OCI-LY7 (cell line): ENCODE measurements at regions of chr11 and their contacts with region 1.

Region 1: DNA sequence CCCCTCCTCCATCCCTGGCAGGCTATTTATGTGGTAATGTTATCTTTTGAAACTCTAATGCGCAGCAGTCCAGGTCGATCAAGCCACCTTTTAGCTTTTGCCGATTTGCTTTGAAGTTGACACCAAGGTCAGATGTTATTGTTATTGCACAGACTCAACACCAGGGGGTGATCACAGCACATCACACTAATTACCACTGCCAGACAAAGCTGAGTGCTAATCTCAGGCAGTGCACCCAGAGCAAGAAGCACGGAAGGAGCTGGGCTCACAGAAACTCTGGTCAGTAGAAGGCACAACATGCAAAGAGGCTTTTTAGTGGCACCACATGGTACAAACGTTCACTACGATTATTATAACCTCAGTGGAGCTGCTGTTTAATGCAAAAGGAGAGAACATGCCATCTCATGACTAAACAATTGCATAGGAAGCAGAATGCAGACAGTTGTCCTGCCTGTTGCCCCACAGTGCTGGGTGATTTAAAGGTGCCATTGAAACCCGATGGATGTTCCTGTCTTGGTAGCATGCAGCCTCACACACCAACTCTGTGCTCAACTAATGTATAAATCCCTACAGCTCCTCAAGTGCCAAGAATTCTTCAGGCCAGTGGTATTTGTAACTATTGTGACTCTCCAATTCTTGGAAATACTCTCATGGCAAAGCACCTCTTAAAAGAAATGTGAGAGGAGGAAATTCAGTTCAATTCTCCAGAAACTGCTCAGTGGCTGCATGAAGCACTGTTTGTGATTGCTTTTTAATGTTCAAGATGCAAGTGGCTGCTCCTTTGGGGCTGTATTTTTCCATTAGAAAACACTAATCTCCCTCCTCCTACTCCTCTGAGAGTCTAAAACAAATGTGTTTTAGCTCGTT is 353.9 kb upstream of the DDI1 start:
- DNase-seq: peak; percentile 75
- H3K4me3 ChIP-seq: no peak overlapping the region
- H3K27ac ChIP-seq: no peak overlapping the region
- H3K4me1 ChIP-seq: no peaks in the 10 kb centered on the region
- CTCF ChIP-seq: peak; percentile 88

Region 2: GRCh38 chr11:103529181-103529684 is 153.3 kb before region 1 on chr11:
- CTCF ChIA-PET with region 1: no interaction called
- POLR2A ChIA-PET with region 1: no interaction called
- intact Hi-C with region 1: no loop called
- DNase-seq: no peak
- H3K4me3 ChIP-seq: no peak overlapping the region
- H3K27ac ChIP-seq: no peak overlapping the region
- H3K4me1 ChIP-seq: no peaks in the 10 kb centered on the region
- CTCF ChIP-seq: no peak

Region 3: DNA sequence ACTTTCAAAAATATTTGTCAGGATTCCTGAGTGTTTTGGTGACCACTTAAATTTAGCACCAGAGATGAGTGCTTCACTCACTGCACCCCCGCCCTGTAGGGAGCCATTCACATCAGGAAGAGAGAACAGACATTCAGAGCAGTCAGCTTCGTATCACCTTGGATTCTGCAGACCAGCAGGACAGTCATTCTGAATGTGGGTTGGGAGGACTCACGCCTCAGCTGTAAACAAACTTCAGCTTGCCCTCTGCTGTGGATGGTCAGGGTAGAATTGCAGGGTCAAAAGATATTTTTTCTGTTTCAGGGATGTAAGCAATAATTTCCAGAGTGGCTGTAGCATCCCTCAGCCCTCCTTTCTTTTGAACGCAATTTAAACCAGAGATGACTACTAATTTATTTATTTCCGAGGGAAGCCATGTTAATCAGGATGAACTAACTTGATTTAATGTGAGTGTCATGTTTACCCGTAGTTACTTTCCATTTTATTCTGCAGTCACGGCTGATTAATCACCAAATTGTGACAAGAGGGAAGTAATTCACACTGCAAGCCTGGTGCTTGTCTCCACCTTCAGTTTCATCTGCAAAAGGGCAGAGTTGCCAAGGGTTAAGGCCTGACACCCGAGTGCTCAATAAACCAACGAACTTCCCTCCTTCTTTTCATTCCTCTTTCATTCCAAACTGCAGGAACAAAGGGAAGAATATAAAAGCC is 179.7 kb after region 1 on chr11:
- CTCF ChIA-PET with region 1: no interaction called
- POLR2A ChIA-PET with region 1: no interaction called
- intact Hi-C with region 1: loop called (anchors 1 kb)
- DNase-seq: peak; percentile 16
- H3K4me3 ChIP-seq: no peak overlapping the region
- H3K27ac ChIP-seq: no peak overlapping the region
- H3K4me1 ChIP-seq: peaks cover 9% of the 10 kb centered on the region
- CTCF ChIP-seq: no peak; the same call in 1 of the 2 replicates

Region 4: DNA sequence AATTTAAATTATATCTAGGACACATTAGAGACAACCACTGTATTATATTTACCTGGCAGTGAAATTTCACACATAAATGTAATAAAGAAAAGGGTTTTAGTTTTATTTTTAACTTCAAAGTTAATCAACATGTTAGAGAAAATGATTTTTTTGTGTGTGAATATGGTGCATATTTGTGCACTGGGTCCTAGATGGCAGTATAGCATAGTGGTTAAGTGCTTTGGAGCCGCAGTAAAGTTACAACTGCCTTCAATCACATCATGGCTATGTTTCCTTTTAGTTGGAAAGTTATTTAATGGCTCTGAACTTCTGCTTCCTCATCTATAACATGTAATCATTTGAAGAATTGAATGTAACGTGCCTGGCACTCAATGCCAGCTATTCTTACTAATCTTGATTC is 245.0 kb after region 1 on chr11:
- CTCF ChIA-PET with region 1: no interaction called
- POLR2A ChIA-PET with region 1: interaction called, 3 read pairs
- intact Hi-C with region 1: loop called (anchors 2 kb)
- DNase-seq: peak; percentile 28
- H3K4me3 ChIP-seq: no peak overlapping the region
- H3K27ac ChIP-seq: no peak overlapping the region
- H3K4me1 ChIP-seq: peaks cover 20% of the 10 kb centered on the region
- CTCF ChIP-seq: peak; percentile 75

Region 5: DNA sequence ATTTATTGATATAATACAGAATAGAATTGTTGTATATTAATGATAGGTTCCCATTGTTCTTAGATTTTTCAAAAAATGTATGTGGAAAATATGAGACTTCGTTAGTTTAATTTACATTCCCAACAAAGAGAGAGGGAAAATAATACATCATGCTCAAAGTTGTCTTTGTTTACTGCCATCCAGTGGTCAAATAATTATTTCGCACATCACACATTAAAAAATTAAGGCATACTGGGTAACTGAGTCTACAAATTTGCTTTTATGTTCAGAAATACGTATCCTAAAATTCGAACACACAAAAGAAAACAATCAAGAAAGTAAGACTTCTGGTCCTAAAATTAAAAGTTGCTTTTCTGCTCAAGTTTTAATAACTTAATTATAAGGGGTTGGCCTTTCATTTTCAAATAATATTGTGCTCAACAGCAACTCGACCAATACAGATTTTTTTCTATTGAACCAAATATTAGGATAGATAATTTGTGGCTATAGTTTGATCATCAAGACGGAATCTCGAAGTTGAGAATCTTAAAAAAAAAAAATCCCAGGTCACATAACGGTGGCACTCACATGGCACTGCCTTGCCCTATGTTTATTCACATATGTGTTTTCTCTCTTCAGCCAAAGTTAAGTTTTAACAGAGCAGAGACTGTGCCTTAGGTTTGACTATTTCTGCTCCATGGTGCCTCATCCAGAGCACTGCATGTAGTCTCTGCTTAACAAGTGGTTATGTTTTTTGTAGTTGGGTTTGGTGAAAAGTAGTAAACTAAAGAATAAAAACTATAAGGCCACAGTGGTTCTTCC is 469.1 kb after region 1 on chr11:
- CTCF ChIA-PET with region 1: no interaction called
- POLR2A ChIA-PET with region 1: no interaction called
- intact Hi-C with region 1: loop called (anchors 1 kb)
- DNase-seq: peak; percentile 38
- H3K4me3 ChIP-seq: no peak overlapping the region
- H3K27ac ChIP-seq: no peak overlapping the region
- H3K4me1 ChIP-seq: peaks cover 21% of the 10 kb centered on the region
- CTCF ChIP-seq: peak; percentile 82

Region 6: DNA sequence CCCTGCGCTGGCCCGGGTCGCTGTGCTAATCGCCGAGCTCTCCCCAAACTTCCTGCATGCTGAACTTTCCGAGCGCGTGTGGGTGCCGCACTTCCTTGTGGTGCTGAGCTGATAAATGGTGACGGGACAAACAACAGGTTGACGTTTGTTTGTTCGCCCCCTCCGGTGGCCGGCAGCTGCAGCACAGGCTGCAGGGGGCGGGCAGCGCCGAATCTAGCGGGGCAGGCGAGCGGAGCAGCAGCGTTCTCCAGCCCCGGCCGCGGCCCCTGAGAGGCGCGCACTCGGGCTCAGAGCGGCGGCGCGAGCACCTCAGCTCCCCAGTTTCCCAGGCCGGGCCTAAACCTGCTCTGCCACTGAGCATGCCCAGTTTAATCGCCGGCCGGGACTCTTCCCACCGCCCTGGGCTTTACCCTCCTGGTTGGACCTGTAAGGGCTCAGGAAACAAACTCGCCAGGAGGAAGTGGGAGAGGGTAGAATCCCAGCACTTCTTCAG is 481.5 kb after region 1 on chr11 and contains the start of gene PDGFD:
- CTCF ChIA-PET with region 1: interaction called, 7 read pairs
- POLR2A ChIA-PET with region 1: interaction called, 3 read pairs
- intact Hi-C with region 1: loop called (anchors 2 kb)
- DNase-seq: peak; percentile 87
- H3K4me3 ChIP-seq: peak within 1 kb of the TSS; percentile 73
- H3K27ac ChIP-seq: peak within 1 kb of the TSS; percentile 33
- H3K4me1 ChIP-seq: peaks cover 19% of the 10 kb centered on the region
- CTCF ChIP-seq: peak; percentile 56; the same call in 1 of the 2 replicates
- total RNA-seq, gene PDGFD: 0.98 and 1.0 TPM in 2 replicates

Region 7: GRCh38 chr11:104333977-104334376 is 651.4 kb after region 1 on chr11:
- CTCF ChIA-PET with region 1: interaction called, 3 read pairs
- POLR2A ChIA-PET with region 1: interaction called, 3 read pairs
- intact Hi-C with region 1: loop called (anchors 2 kb)
- DNase-seq: peak; percentile 41
- H3K4me3 ChIP-seq: no peak overlapping the region
- H3K27ac ChIP-seq: no peak overlapping the region
- H3K4me1 ChIP-seq: no peaks in the 10 kb centered on the region
- CTCF ChIP-seq: peak; percentile 80